Caco-2 (cell line): ENCODE measurements at regions of chr10 and their contacts with region 1.

Region 1: DNA sequence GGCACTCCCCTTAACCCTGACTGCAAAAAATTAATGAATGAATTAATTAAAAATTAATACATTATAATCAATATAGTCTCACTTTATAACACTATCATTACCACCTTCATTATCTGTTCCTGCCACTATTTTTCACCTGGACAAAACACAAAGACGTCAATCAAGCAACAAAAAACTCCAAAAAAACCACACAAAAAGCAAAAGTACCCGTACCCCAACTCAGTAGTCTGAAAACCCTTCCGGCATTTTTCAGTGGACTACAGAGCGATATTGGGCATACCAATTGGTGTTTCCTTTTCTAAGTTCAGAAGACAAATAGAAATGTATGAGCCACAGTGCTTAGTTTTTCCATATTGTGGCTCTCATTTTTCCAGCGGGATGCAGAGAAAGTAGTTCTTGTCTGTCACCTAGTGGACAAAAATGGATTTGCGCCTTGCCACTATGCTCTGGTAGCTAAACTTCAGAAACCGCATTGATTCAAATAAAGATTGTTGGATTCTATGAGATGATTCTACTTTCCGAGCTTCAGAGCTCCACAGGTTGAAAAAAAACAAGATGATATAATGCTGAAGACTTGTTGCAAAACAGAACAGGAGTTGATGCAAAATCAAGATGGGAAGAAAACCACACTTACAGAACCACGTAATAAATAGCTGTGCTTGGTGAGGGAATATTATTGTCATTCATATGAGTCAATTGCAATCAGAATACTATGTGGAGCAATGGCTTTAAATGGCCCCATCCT is 50.6 kb upstream of the ITGB1 start:
- DNase-seq: peak; percentile 63 to 82
- H3K4me3 ChIP-seq: no peak overlapping the region
- H3K4me3 Mint-ChIP-seq: peak overlapping the region; percentile 20
- H3K27ac Mint-ChIP-seq: no peak overlapping the region
- H3K4me1 ChIP-seq: peaks cover 25% of the 10 kb centered on the region
- H3K4me1 Mint-ChIP-seq: peaks cover 24% of the 10 kb centered on the region
- H3K27me3 ChIP-seq: no peaks in the 10 kb centered on the region
- H3K27me3 Mint-ChIP-seq: no peaks in the 10 kb centered on the region
- CTCF ChIP-seq: peak; percentile 99

Region 2: DNA sequence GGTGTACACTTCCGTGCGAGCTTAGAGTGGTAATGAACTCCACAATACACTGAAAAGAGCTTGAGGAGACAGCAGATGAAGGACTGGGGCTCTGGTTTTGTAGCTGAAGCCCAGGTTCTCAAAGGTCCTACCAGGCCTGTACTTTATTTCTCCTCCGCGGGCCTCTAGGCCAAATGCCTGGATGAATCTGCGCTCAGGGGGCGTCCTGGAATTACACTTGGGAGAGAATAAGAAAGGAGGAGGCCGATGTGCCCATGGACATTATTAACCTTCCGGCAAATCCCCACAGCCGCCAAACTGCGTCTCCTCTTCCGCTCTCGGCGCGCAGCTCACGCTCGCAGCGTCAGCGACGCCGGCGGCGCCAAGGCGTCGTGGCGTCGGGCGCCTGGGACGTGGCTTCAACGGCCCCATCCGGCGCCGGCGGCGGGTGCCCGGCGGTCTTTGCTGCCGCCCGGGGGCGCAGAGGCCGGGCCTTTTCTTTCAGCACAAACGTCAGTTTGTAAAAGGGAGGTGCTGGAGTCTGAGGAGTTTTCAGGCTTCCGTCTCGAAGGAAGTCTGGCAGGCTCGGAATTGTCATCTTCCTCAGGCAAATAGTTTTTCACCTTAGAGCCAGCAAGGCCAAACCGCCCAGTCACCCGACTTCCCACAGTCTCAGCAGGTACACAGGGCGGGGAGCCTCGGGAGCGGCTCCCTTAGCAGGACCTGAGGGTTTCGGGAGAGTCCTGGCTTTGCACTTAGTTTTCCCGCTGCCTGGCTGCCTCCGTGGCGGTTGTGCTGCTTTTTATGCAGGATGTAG is 562.7 kb before region 1 on chr10 and contains the start of gene CCDC7:
- CTCF ChIA-PET with region 1: no interaction called
- POLR2A ChIA-PET with region 1: no interaction called
- intact Hi-C with region 1: loop called (anchors 2 kb)
- DNase-seq: peak; percentile 83 to 91
- H3K4me3 ChIP-seq: peak within 1 kb of the TSS; percentile 59
- H3K4me3 Mint-ChIP-seq: peak within 1 kb of the TSS; percentile 73
- H3K27ac Mint-ChIP-seq: peak within 1 kb of the TSS; percentile 92
- H3K4me1 ChIP-seq: 0 out of 2 replicates have a peak, but pooled peaks cover 5% of the 10 kb centered on the region
- H3K4me1 Mint-ChIP-seq: no peaks in the 10 kb centered on the region
- H3K27me3 ChIP-seq: no peaks in the 10 kb centered on the region
- H3K27me3 Mint-ChIP-seq: no peaks in the 10 kb centered on the region
- CTCF ChIP-seq: peak; percentile 30 to 60
- total RNA-seq, gene CCDC7: 0.72 and 1.2 TPM in 2 replicates

Region 3: DNA sequence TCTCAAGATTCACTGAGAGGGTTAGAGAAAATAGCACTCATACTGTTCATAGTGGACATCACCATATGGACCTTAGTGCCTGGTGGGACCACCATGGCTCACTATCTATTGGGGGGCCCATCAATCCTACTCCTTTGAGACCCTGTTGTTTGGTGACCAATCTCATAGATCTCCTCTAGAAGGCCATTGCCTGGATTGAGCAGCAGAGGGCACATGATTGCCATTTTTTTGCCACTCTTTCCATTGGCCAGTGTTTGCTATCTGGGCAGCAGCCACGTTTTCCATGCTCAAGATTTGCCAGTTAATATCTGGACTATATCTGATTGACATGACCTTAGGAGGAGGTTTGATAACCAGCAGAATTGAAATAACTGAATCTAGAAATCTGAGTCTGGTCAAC is 295.1 kb before region 1 on chr10:
- CTCF ChIA-PET with region 1: no interaction called
- POLR2A ChIA-PET with region 1: no interaction called
- intact Hi-C with region 1: loop called (anchors 1 kb)
- DNase-seq: peak in 1 of 2 experiments; percentile 17
- H3K4me3 ChIP-seq: no peak overlapping the region
- H3K4me3 Mint-ChIP-seq: no peak overlapping the region
- H3K27ac Mint-ChIP-seq: no peak overlapping the region
- H3K4me1 ChIP-seq: no peaks in the 10 kb centered on the region
- H3K4me1 Mint-ChIP-seq: no peaks in the 10 kb centered on the region
- H3K27me3 ChIP-seq: no peaks in the 10 kb centered on the region
- H3K27me3 Mint-ChIP-seq: peaks cover 9% of the 10 kb centered on the region
- CTCF ChIP-seq: peak in 1 of 2 experiments; percentile 37

Region 4: DNA sequence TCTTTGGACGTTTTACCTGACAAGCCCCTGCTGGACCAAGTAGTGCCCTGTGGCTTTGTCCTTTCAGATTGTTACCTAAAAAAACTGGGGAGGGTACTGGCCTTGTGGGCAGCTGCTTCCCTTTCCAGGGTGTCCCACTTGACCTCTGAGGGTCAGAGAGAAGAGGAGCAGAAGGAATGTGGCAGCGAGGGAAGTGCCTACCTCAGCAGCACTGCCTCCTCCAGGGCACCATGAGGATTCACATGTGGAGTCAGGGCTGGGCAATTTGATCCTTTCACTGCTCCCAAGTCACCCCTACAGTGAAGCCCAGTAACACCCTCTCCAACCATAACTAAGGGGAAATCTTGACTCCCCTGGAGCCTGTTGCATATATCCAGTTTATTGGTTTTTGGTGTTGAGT is 115.2 kb before region 1 on chr10:
- CTCF ChIA-PET with region 1: no interaction called
- POLR2A ChIA-PET with region 1: no interaction called
- intact Hi-C with region 1: loop called (anchors 5 kb)
- DNase-seq: peak in 1 of 2 experiments; percentile 20
- H3K4me3 ChIP-seq: no peak overlapping the region
- H3K4me3 Mint-ChIP-seq: no peak overlapping the region
- H3K27ac Mint-ChIP-seq: no peak overlapping the region
- H3K4me1 ChIP-seq: no peaks in the 10 kb centered on the region
- H3K4me1 Mint-ChIP-seq: no peaks in the 10 kb centered on the region
- H3K27me3 ChIP-seq: no peaks in the 10 kb centered on the region
- H3K27me3 Mint-ChIP-seq: no peaks in the 10 kb centered on the region
- CTCF ChIP-seq: no peak

Region 5: DNA sequence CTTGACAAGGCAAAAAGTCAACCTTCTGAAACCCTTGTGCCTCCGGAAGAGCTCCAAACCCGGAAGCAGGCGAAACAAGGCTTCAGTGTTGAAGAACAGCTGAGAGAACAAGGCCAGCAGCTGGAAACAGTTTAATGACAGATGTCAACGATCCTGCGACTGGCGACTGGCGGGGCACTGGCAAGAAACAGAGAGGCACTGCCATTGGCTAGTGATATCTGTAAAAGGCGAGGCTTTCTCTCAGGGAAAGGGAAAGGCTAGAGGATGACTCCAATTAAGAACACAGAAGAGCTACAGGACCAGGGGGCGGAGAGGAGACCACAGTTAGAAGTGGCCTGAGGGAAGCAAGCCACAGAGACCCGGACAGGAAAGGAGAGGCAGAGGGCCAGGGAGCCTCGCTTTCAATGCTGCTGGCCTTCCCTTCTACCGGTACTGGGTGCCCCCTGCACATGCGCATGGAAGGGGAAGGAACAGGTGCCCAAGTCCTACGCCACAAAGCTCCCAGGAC is 70.1 kb before region 1 on chr10:
- CTCF ChIA-PET with region 1: interaction called, 3 read pairs
- POLR2A ChIA-PET with region 1: no interaction called
- intact Hi-C with region 1: loop called (anchors 1 kb)
- DNase-seq: peak in 1 of 2 experiments; percentile 59
- H3K4me3 ChIP-seq: no peak overlapping the region
- H3K4me3 Mint-ChIP-seq: peak overlapping the region; percentile 40
- H3K27ac Mint-ChIP-seq: peak overlapping the region; percentile 70
- H3K4me1 ChIP-seq: peaks cover 29% of the 10 kb centered on the region
- H3K4me1 Mint-ChIP-seq: peaks cover 33% of the 10 kb centered on the region
- H3K27me3 ChIP-seq: no peaks in the 10 kb centered on the region
- H3K27me3 Mint-ChIP-seq: no peaks in the 10 kb centered on the region
- CTCF ChIP-seq: no peak

Region 6: DNA sequence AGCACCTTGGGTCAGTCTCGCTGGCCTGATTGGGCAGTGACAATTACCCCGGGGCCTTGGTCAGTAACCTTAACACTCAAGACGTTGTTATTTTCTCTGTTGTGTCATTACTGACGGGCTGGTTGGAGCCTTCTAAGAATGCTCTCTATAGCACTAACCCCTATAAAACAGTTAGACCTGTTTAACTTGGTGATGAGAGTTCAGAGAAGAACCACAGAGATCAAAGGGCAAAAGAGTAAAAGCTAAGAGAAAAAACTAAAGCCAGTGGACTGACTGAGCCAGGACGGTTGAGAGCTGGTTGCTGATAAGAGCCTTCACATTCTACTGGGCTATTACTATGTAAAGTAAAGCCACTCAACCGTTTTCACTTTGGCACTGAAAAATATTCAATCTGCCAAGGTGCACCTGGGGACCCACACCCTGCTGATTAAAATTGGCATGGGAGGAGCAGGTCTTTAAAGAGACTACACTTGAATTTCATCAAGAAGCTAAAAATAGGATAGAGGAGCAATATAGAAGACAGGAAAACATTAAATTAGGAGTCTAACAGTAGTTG is 37.1 kb before region 1 on chr10:
- CTCF ChIA-PET with region 1: interaction called, 6 read pairs
- POLR2A ChIA-PET with region 1: no interaction called
- intact Hi-C with region 1: loop called (anchors 1 kb)
- DNase-seq: peak; percentile 70 to 72
- H3K4me3 ChIP-seq: no peak overlapping the region
- H3K4me3 Mint-ChIP-seq: peak overlapping the region; percentile 51
- H3K27ac Mint-ChIP-seq: peak overlapping the region; percentile 58
- H3K4me1 ChIP-seq: peaks cover 27% of the 10 kb centered on the region
- H3K4me1 Mint-ChIP-seq: peaks cover 23% of the 10 kb centered on the region
- H3K27me3 ChIP-seq: no peaks in the 10 kb centered on the region
- H3K27me3 Mint-ChIP-seq: no peaks in the 10 kb centered on the region
- CTCF ChIP-seq: no peak

Region 7: GRCh38 chr10:33155720-33156638 is 147.3 kb after region 1 on chr10:
- CTCF ChIA-PET with region 1: interaction called, 11 read pairs
- POLR2A ChIA-PET with region 1: no interaction called
- intact Hi-C with region 1: loop called (anchors 1 kb)
- DNase-seq: peak; percentile 81 to 88
- H3K4me3 ChIP-seq: no peak overlapping the region
- H3K4me3 Mint-ChIP-seq: peak overlapping the region; percentile 28
- H3K27ac Mint-ChIP-seq: peak overlapping the region; percentile 8
- H3K4me1 ChIP-seq: peaks cover 36% of the 10 kb centered on the region
- H3K4me1 Mint-ChIP-seq: peaks cover 11% of the 10 kb centered on the region
- H3K27me3 ChIP-seq: no peaks in the 10 kb centered on the region
- H3K27me3 Mint-ChIP-seq: no peaks in the 10 kb centered on the region
- CTCF ChIP-seq: peak; percentile 72 to 92

Region 8: GRCh38 chr10:34454590-34455261 is 1446.1 kb after region 1 on chr10:
- CTCF ChIA-PET with region 1: no interaction called
- POLR2A ChIA-PET with region 1: no interaction called
- intact Hi-C with region 1: no loop called
- DNase-seq: no peak
- H3K4me3 ChIP-seq: no peak overlapping the region
- H3K4me3 Mint-ChIP-seq: no peak overlapping the region
- H3K27ac Mint-ChIP-seq: no peak overlapping the region
- H3K4me1 ChIP-seq: no peaks in the 10 kb centered on the region
- H3K4me1 Mint-ChIP-seq: peaks cover 9% of the 10 kb centered on the region
- H3K27me3 ChIP-seq: no peaks in the 10 kb centered on the region
- H3K27me3 Mint-ChIP-seq: no peaks in the 10 kb centered on the region
- CTCF ChIP-seq: no peak